ENCODE measurements at regions of chr1 and their contacts with region 1.

Region 1: GRCh38 chr1:89001510-89001909 is 9.1 kb upstream of the KYAT3 start:
- DNase-seq: no peak
- H3K4me3 ChIP-seq: no peak overlapping the region
- CTCF ChIP-seq: no peak
- POLR2A ChIP-seq: no peak

Region 2: DNA sequence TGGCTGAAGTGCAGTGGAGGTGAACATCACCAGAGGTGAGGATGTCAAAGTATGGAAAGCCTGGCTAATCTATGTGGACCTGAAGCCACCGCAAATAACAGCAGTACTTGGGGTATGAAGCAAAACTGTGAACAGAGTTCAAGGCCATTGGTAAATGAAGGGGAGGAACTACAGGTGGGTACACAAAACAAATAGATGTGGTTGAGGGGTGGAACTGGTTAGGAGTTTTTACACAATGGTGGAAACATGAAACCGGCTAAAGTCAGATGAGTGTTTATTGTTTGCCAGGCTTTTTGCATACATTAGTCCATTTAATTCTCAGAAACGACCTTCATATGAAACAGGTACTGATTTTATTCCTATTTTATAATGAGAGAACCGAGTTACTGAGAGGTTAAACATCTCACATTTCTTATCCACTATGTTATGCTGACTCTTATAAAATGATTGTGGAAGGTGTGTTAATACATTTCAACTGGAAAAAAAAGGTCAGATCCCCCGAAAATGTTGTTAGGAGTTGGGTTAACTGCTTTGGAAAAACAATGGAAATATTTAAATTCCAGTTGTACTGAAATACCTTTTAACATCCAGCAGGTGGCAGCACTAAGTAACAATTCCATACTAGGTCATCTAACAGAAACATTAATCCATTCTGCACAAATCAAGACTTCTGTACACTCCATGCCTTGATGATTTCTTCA is 65.8 kb before region 1 on chr1:
- intact Hi-C with region 1: no loop called
- DNase-seq: no peak
- H3K4me3 ChIP-seq: no peak overlapping the region
- CTCF ChIP-seq: no peak
- POLR2A ChIP-seq: no peak

Region 3: GRCh38 chr1:89358287-89358893 is 356.9 kb after region 1 on chr1:
- intact Hi-C with region 1: loop called (anchors 10 kb)
- DNase-seq: peak; percentile 71 to 93
- H3K4me3 ChIP-seq: no peak overlapping the region
- CTCF ChIP-seq: peak in 1 of 3 donors; percentile 30
- POLR2A ChIP-seq: no peak

Region 4: DNA sequence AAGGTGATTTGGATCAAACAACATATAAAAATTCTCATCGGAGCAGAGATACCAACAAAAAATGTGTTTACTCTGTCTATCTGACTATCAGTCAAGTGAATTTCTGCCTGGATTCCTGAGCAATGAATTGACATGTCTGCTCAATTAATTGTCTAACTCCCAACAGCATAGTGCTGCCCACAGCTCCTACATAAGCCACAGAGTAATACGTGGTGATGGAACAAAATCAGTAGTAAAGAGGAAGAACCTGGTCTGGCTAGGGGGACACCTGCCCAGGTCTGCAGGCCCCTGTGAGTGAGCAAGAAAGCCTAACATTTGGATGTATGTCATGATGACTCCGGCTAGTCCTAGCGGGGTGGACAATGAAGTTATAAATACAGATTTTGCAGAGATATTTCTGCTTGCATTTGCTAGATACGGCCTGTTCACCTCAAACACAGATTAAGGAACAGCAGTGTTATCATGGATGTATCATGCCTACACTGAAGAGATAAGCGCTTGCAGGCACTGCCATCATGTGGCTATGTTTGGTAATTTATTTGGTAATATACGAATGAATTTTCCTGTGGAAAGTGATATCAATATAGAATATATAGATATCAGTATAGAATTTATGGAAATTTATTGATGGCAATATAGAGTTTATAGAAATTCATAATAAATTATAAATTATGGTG is 453.5 kb after region 1 on chr1:
- intact Hi-C with region 1: loop called (anchors 10 kb)
- DNase-seq: peak in 1 of 2 donors; percentile 56
- H3K4me3 ChIP-seq: no peak overlapping the region
- CTCF ChIP-seq: no peak
- POLR2A ChIP-seq: no peak

Region 5: GRCh38 chr1:89632657-89633247 is 631.2 kb after region 1 on chr1 and contains the start of gene LRRC8C:
- intact Hi-C with region 1: loop called (anchors 5 kb)
- DNase-seq: peak; percentile 59 to 96
- H3K4me3 ChIP-seq: peak within 1 kb of the TSS; percentile 79
- CTCF ChIP-seq: no peak
- POLR2A ChIP-seq: no peak
- total RNA-seq, gene LRRC8C: 4.3 to 6.2 (median 5.7) TPM